ENCODE measurements at regions of chr13 and their contacts with region 1.

Region 1: DNA sequence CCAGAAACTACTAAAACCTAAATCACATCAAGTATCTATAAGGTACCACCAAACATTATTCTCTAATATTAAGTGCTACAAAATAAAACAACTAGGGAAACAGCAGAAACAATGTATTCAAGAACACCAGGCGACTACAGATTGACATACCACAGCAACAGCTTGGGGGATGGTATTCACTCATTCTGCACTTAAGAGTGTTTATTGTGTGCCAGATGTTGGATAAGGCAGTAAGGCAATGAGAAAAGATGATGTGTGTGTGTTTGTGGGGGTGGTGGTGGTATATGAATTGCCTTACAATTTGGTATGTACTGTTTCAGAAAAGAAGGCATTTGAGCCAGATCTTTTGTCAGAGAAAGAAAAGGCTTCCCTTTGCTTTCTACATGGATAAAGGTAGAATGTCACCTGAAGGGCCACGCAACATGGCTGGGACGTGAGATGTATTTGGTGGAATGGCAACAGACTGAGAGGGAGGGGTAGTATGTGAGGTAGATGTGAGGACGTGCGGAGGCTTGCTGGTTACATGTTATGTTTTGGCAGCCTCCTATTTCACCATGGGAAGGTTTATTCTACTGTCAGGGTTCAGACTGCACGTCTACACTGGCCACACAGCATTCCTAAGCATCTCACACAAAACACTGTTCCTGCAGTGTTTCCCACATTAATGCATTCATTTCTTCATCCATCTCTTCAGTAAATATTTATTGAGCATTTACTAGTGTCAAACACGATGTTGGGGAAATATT is 300.7 kb downstream of the KLF12 start:
- DNase-seq: no peak
- H3K27ac ChIP-seq: no peak overlapping the region
- CTCF ChIP-seq: no peak

Region 2: GRCh38 chr13:73618275-73618865 is 215.1 kb before region 1 on chr13:
- CTCF ChIA-PET with region 1: no interaction called
- POLR2A ChIA-PET with region 1: no interaction called
- DNase-seq: no peak
- H3K27ac ChIP-seq: no peak overlapping the region
- CTCF ChIP-seq: no peak

Region 3: DNA sequence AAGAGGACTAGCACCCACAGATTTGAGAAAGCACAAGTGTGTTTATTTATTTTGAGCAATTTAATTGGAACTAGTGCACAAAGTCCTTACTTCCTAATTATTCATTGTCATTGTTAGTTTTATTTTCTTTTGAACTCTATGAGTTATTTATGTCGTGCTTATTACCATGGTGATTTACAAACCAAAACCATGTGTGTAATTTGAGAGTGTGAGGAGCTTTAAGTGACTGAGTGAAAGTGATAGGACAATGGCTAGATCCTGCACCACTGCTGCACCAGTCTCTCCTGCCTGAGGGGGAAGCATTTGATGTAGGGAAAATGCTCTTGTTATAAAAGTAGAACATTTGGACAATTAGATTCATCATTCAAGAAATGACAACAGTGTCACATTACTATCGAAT is 473.0 kb after region 1 on chr13:
- CTCF ChIA-PET with region 1: no interaction called
- POLR2A ChIA-PET with region 1: no interaction called
- DNase-seq: no peak
- H3K27ac ChIP-seq: no peak overlapping the region
- CTCF ChIP-seq: no peak

Region 4: DNA sequence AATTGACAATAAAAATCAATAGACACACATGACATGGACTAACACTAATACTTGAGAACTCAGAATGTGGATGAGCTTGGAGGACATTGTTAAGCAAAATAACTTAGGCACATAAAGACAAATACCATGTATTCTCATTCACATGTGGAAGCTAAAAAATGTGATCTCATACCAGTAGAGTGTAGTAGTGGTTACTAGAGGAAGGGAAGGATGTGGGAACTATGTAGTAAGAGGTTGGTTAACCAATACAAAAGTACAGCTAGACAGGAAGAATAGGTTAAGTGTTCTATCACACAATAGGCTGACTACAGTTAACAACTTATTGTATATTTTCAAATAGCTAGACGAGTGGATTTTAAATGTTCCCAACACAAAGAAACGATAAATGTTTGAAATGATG is 716.5 kb after region 1 on chr13:
- CTCF ChIA-PET with region 1: no interaction called
- POLR2A ChIA-PET with region 1: interaction called, 11 read pairs
- DNase-seq: no peak
- H3K27ac ChIP-seq: no peak overlapping the region
- CTCF ChIP-seq: no peak